ENCODE measurements at regions of chr12 and their contacts with region 1.

Region 1: DNA sequence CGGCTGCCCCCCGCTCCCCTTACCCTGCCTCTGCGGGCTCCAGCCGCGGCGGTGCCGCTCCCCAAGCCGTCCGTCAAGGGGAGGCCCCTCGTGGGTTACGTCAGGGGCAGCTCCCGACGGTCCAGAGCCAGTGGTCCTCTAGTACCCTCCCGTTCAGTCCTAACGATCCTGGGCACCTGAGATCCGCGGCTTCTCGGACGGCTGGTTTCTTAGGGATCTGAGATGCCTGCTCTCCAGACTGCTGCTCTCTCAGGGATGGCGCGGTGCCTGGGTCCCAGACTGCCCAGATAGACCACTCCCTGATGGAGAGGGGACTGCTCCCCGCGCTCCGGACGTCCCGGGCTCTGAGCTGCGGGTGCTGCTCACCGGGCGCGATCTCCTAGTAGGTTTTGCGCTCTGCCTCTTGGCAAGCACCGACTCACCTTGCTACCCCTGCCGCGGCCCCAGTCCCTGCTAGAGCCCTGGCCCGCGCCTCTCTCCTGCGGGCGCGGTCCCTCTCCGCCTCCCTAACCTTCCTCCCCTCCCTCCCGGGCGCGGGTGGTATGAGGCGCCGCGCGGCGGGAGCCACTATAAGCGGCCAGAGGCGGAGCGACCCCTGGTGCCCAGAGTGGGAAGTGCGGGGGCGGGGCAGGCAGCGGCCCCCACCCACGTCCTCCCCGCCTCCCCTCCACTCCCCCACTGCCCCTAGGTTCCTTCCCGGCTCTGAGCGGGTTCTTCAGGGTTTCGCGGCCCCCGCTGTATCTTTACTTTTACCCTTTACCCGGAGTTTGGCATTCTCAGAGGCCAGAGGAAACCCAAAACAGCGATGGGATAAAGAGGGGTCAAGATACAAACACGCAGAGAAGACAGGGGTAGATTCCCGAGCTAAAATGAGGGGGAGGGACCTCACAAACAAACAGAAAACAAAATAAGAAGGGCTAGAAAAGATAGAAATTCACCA is at the start of gene C1QL4:
- DNase-seq: peak; percentile 91
- H3K4me3 Mint-ChIP-seq: peak within 1 kb of the TSS; percentile 55
- H3K27ac Mint-ChIP-seq: no peak within 1 kb of the TSS
- H3K4me1 Mint-ChIP-seq: peaks cover 23% of the 10 kb centered on the region
- H3K27me3 Mint-ChIP-seq: peaks cover 100% of the 10 kb centered on the region

Region 2: GRCh38 chr12:49288412-49288853 is 48.5 kb before region 1 on chr12:
- CTCF ChIA-PET with region 1: interaction called, 103 read pairs
- DNase-seq: peak; percentile 84
- H3K4me3 Mint-ChIP-seq: no peak overlapping the region
- H3K27ac Mint-ChIP-seq: no peak overlapping the region
- H3K4me1 Mint-ChIP-seq: peaks cover 2% of the 10 kb centered on the region
- H3K27me3 Mint-ChIP-seq: peaks cover 81% of the 10 kb centered on the region

Region 3: DNA sequence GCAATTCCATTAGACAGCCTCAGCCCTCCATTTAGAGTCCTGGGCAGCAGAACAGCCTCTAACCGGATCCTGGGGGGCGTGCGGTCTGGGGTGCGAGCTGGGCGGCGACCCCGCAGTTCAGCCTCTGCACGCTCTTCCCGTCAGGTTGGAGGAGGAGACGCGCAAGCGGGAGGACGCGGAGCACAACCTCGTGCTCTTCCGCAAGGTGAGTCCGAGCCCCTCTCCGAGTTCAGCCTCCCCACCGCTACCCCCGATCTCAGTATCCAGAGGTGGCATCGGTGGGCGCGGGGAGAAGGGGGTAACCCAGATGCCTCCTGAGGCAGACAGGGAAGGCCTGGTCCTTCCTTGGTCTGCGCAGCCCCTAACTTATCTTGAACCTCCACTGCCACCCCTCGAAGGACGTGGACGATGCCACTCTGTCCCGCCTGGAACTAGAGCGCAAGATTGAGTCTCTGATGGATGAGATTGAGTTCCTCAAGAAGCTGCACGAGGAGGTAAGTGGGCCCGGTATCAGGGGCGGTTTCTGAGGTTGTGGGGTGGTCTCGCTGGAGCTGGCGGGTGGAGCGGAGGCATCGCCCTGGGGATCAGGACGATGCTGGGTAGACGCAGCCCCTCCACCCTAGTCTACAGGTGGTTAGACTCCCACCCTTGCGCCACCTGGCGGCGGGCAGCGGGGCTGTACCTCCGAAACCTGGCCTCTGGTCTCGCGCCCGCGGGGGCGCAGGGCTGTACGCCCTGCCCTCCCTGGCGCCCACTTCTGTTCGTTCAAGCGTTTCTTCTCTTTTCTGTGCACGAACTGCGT is 40.7 kb before region 1 on chr12:
- CTCF ChIA-PET with region 1: interaction called, 103 read pairs
- DNase-seq: peak; percentile 76
- H3K4me3 Mint-ChIP-seq: peak overlapping the region; percentile 37
- H3K27ac Mint-ChIP-seq: no peak overlapping the region
- H3K4me1 Mint-ChIP-seq: peaks cover 25% of the 10 kb centered on the region
- H3K27me3 Mint-ChIP-seq: peaks cover 96% of the 10 kb centered on the region

Region 4: DNA sequence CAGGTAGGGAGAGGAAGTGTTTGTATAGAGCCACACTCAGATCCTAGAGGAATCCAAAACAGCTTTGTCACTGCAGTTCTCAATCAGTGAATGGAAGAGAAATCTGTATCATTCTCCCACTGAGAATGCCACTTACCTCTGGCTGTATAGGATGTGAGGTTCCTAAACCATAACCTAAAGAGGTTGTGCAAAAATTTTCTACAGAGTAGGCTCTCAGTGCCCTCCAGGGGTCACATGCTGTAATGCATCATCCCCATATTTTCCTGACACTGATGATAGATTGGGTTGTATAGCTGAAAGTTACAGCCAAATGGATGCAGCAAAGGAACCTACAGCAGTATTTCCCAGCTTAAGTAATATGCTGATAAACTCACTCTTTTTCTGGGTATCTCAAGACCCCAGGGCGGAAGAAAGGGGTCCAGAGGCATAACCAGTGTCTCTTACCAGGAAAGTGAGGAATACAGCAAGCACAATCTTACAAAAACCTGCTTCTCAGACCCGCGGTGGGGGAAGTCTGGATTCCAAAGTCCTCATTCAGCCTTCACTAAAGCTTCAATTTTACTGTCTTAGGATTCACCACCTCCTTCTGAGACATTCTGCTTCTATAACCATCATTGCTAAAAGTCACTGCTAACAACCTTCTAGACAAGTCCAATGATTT is 502.2 kb after region 1 on chr12:
- CTCF ChIA-PET with region 1: no interaction called
- DNase-seq: peak; percentile 63
- H3K4me3 Mint-ChIP-seq: no peak overlapping the region
- H3K27ac Mint-ChIP-seq: no peak overlapping the region
- H3K4me1 Mint-ChIP-seq: peaks cover 32% of the 10 kb centered on the region
- H3K27me3 Mint-ChIP-seq: no peaks in the 10 kb centered on the region